ENCODE measurements at regions of chr19 and their contacts with region 1.

Region 1: GRCh38 chr19:2543463-2544442 is 67.8 kb downstream of the GADD45B start:
- DNase-seq: peak; percentile 97
- H3K4me3 ChIP-seq: peak overlapping the region; percentile 32 to 48 (median 38)
- H3K27ac ChIP-seq: peak overlapping the region; percentile 91 to 97 (median 92)
- H3K4me1 ChIP-seq: peaks cover 72 to 87% (median 82%) of the 10 kb centered on the region in 4 donors
- H3K27me3 ChIP-seq: no peaks in the 10 kb centered on the region
- CTCF ChIP-seq: peak; percentile 26 to 44 (median 42)
- EP300 ChIP-seq: peak; percentile 97
- POLR2A ChIP-seq: no peak

Region 2: GRCh38 chr19:2475702-2476450 is 67.9 kb before region 1 on chr19 and contains the start of gene GADD45B:
- intact Hi-C with region 1: loop called (anchors 2 kb)
- DNase-seq: peak; percentile 100
- H3K4me3 ChIP-seq: peak within 1 kb of the TSS; percentile 63 to 98 (median 91)
- H3K27ac ChIP-seq: peak within 1 kb of the TSS; percentile 90 to 96 (median 93)
- H3K4me1 ChIP-seq: peaks cover 30 to 43% (median 42%) of the 10 kb centered on the region in 4 donors
- H3K27me3 ChIP-seq: no peaks in the 10 kb centered on the region
- CTCF ChIP-seq: no peak
- EP300 ChIP-seq: peak; percentile 89
- POLR2A ChIP-seq: peak; percentile 100
- total RNA-seq, gene GADD45B: 56.5 to 793 (median 90.5) TPM

Region 3: DNA sequence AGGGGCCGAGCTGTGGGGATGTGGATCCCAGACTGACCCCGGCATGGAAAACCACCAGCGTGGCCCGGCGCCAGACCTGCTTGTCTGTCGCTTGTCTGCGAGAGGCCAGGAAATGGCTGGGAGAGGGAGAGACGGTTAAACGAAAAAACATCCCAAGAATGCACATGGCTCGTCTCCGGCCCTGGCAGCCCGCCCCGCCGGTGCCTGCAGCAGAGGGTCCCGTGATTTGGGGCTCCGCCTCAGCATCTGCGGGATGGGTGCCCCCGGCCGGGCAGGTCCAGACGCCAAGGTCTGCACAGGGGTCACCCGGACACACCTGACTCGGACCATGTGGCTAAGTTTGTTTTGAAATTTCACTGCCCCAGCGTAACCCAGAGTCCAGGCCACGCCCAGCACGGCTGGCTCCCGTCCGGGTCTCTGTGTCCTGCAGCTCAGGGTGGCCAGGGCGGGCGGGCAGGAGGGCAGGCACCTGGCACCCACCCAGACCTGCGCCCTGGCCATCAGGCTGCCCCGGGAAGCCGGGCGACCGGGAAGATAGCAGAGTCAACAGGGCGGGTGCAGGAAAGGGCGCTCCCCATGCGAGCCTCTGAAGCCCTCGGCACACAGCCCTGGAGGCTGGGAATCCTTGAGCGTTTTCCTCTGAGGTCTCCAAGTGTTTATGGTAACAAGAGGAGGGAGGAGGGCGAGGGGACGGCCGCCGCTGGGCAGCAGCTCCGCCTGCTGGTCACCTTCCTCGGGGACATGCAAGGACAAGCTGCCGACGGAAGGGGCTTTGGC is 35.3 kb after region 1 on chr19:
- intact Hi-C with region 1: loop called (anchors 2 kb)
- DNase-seq: peak; percentile 98
- H3K4me3 ChIP-seq: peak overlapping the region; percentile 54 to 68 (median 57)
- H3K27ac ChIP-seq: peak overlapping the region; percentile 89 to 94 (median 93)
- H3K4me1 ChIP-seq: peaks cover 41 to 57% (median 46%) of the 10 kb centered on the region in 4 donors
- H3K27me3 ChIP-seq: no peaks in the 10 kb centered on the region
- CTCF ChIP-seq: peak; percentile 90 to 97 (median 96)
- EP300 ChIP-seq: peak; percentile 87
- POLR2A ChIP-seq: no peak

Region 4: DNA sequence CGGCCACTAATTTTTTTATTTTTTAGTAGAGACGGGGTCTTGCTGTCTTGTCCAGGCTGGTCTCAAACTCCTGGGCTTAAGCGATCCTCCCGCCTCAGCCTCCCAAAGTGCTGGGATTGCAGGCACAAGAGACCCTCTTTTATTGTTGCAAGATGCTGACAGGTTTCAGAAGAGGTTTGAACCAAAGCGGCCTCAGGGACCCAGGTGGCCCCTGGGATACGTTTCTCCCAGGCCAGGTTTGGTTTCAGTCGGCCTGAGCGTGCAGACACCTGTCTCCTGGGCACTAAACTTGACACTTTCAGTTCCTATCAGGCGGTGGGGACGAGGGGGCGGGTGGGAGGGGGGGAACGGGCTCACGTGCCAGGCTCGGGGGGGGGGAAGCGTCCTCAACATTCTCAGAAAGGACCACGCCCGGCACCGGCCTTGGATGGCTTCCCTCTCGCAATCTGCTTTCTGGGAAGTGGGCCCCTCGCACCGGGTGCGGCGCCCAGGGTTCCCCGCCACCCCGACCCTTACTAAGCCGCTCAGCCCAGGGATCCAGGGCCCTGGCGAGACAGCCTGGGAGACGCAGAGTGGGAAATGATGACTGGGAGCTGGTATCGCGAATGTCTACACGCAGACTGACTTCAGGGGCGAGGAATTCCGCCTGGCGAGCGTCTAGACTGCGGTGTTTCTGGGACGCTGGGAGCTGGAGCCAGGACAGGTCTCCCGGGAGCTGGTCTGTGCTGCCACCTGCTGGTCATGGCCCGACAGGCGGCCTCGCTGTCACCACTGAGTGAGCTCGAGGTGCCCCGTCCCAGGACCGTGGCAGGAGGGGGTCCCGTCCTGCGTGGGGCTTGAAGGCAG is 67.1 kb after region 1 on chr19:
- intact Hi-C with region 1: loop called (anchors 5 kb)
- DNase-seq: peak; percentile 98
- H3K4me3 ChIP-seq: peak overlapping the region; percentile 50 to 59 (median 54)
- H3K27ac ChIP-seq: peak overlapping the region; percentile 89 to 92 (median 90)
- H3K4me1 ChIP-seq: peaks cover 17 to 39% (median 30%) of the 10 kb centered on the region in 4 donors
- H3K27me3 ChIP-seq: no peaks in the 10 kb centered on the region
- CTCF ChIP-seq: peak; percentile 98 to 99 (median 99)
- EP300 ChIP-seq: peak; percentile 86
- POLR2A ChIP-seq: no peak

Region 5: DNA sequence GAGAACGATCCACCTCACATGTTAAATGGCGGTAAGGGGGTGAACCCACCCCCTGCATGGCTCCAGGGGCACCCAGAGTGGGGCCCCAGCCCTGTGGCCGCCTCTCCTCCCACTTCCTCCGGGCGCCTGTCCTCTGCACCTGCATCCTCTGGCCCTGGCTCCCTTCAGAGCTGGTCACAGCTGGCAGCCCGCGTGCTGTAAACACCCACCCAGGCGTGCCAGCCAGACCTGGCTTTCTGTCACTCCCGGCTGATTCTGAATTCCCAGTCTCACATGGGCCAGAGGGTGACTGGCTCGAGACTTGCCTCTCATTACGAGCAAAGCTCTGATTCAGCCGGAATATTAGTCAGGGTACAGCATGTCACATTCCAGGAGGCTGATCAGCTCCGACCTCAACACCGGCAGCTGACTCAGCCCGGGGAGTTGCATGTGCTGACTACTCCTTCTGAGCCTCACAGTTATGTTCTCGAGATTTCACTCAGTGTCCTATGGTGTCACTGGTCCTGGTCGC is 83.6 kb after region 1 on chr19:
- intact Hi-C with region 1: no loop called
- DNase-seq: peak; percentile 95
- H3K4me3 ChIP-seq: no peak overlapping the region
- H3K27ac ChIP-seq: peak overlapping the region; percentile 67 to 83 (median 78)
- H3K4me1 ChIP-seq: peaks cover 23 to 30% (median 24%) of the 10 kb centered on the region in 4 donors
- H3K27me3 ChIP-seq: no peaks in the 10 kb centered on the region
- CTCF ChIP-seq: no peak
- EP300 ChIP-seq: peak; percentile 82
- POLR2A ChIP-seq: peak; percentile 4

Region 6: DNA sequence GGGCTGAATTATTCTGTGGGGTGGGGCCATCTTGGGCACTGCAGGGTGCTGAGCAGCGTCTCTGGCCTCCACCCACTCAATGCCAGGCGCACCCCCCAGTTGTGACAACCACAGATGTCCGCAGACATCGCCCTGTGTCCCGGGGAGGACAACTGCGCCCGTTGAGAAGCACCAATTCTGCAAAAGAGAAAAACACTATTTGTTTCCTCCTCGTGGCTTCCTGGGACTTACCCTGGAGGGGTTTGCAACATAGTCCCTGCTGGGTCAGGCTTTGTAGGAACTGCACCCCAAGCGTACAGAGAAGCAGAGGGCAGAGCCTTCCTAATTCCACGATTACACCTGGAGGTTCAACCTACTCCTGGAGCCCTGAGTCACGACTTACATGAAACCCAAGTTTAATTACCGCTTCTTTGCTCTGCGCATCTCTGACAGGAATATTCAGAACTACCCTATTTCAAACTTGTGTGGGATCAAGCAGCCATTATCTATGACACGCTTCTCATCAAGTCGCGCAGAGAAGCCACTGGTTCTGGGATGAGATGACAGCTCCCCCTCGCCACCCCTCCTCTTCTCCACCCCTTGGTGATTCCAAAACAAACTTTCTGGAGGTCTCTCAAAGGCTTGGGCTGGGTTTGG is 207.2 kb after region 1 on chr19:
- intact Hi-C with region 1: no loop called
- DNase-seq: no peak
- H3K4me3 ChIP-seq: no peak overlapping the region
- H3K27ac ChIP-seq: no peak overlapping the region
- H3K4me1 ChIP-seq: peaks cover 0 to 8% (median 5%) of the 10 kb centered on the region in 4 donors
- H3K27me3 ChIP-seq: no peaks in the 10 kb centered on the region
- CTCF ChIP-seq: no peak
- EP300 ChIP-seq: no peak
- POLR2A ChIP-seq: no peak